ENCODE measurements at regions of chr1 and their contacts with region 1.

Region 1: DNA sequence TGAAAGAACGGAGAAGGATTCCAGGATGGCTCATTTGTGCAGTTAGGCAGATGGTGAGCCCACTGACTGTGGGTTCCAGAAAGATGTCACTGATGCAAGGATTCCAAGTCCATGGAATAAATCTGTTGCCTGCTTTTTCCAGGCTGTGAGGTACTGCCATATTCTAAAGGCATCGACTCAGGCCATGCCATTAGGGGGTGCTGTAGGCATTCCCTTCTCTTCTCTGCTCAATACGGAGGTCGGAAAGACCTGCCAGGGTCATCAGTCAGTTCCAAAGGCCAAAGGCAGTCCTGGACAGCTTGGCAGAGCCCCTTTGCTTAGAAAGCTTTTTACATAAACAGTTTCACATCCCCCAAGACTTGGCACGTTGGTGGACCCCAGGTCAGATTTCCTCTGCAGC is 31.7 kb upstream of the TMEM125 start:
- DNase-seq: no peak
- ATAC-seq: peak; percentile 88
- H3K4me3 ChIP-seq: no peak overlapping the region
- H3K27ac ChIP-seq: peak overlapping the region; percentile 6
- H3K4me1 ChIP-seq: peaks cover 13% of the 10 kb centered on the region
- H3K27me3 ChIP-seq: no peaks in the 10 kb centered on the region
- CTCF ChIP-seq: peak; percentile 76

Region 2: GRCh38 chr1:43129426-43129825 is 108.7 kb before region 1 on chr1:
- intact Hi-C with region 1: no loop called
- DNase-seq: no peak
- ATAC-seq: no peak
- H3K4me3 ChIP-seq: no peak overlapping the region
- H3K27ac ChIP-seq: no peak overlapping the region
- H3K4me1 ChIP-seq: no peaks in the 10 kb centered on the region
- H3K27me3 ChIP-seq: peaks cover 10% of the 10 kb centered on the region
- CTCF ChIP-seq: no peak

Region 3: DNA sequence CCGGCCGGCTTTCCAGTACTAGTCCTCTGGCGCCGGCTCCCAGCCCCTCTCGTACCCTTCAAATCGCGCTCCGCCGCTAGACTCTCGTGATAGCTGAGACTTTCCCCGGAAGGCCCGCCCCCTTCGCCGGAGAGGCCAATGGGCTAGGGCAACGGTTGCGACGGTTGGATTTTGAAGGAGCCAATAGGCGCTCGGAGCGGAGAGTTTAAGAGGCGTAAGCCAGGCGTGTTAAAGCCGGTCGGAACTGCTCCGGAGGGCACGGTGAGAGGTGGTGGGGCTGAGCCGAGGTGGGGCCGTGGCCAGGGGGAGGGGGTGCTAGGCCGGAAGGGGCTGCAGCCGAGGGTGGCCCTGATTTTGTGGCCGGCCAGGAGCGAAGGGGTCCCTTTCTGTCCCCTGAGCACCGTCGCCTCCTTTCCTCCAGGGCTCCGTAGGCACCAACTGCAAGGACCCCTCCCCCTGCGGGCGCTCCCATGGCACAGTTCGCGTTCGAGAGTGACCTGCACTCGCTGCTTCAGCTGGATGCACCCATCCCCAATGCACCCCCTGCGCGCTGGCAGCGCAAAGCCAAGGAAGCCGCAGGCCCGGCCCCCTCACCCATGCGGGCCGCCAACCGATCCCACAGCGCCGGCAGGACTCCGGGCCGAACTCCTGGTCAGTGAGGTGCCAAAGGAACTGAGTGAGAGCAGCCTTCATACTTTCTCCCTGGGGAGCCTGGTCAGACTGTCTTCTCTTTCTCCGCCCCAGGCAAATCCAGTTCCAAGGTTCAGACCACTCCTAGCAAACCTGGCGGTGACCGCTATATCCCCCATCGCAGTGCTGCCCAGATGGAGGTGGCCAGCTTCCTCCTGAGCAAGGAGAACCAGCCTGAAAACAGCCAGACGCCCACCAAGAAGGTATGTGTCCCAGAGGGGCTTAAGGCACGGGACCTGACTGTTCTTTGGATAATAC is 120.9 kb after region 1 on chr1 and contains the start of gene CDC20:
- intact Hi-C with region 1: loop called (anchors 10 kb)
- DNase-seq: peak; percentile 100
- ATAC-seq: peak; percentile 98
- H3K4me3 ChIP-seq: peak within 1 kb of the TSS; percentile 81
- H3K27ac ChIP-seq: peak within 1 kb of the TSS; percentile 94
- H3K4me1 ChIP-seq: peaks cover 6% of the 10 kb centered on the region
- H3K27me3 ChIP-seq: no peaks in the 10 kb centered on the region
- CTCF ChIP-seq: no peak
- total RNA-seq, gene CDC20: 1.8 TPM